Endothelial cell of umbilical vein (primary cell): ENCODE measurements at regions of chr13 and their contacts with region 1.

Region 1: GRCh38 chr13:98445340-98446233 is 131.3 kb downstream of the STK24 start:
- DNase-seq: peak; percentile 64
- H3K4me3 ChIP-seq: no peak overlapping the region
- H3K27ac ChIP-seq: no peak overlapping the region
- H3K4me1 ChIP-seq: no peaks in the 10 kb centered on the region
- H3K27me3 ChIP-seq: no peaks in the 10 kb centered on the region
- CTCF ChIP-seq: peak; percentile 93 to 99
- POLR2A ChIP-seq: no peak

Region 2: DNA sequence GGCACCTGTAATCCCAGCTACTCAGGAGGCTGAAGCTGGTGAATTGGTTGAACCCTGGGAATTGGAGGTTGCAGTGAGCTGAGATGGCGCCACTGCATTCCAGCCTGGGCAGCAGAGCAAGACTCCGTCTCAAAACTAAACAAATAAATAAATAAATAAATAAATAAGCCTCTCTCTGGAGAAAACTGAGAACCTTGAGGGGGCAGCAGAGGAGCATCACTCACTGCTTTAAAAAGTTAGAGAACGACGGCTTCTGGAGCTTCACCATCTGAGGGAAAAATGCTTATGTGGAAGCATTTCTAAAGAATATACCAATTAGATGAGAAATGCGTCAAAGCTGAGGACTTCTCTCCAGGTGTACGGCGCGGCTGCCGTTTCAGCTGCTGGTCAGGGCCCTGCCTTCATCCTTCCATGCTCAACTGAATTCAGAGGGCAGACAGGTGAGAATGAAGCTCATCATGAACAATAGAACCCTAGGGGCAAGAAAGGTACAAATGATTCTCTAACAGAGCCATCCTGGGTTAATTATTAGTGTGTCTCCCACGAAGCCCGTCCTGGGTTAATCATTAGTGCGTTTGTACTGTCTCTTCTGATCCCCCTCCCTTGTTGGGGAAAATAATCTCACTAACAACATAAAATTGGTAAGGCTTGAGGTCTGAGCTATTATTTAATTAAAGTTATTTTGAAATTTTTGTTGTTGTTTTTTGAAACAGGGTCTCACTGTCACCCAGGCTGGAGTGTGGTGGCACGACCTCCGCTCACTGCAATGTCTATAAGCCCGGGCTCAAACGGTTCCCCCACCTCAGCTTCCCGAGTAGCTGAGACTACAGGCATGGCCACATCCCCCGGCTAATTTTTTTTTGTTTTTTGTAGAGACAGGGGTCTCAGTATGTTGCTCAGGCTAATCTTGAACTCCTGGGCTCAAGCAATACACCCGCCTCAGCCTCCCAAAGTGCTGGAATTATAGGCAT is 412.0 kb before region 1 on chr13:
- CTCF ChIA-PET with region 1: interaction called, 3 read pairs
- POLR2A ChIA-PET with region 1: no interaction called
- dilution Hi-C with region 1: no loop called
- intact Hi-C with region 1: loop called (anchors 1 kb)
- DNase-seq: peak; percentile 45
- H3K4me3 ChIP-seq: no peak overlapping the region
- H3K27ac ChIP-seq: no peak overlapping the region
- H3K4me1 ChIP-seq: no peaks in the 10 kb centered on the region
- H3K27me3 ChIP-seq: no peaks in the 10 kb centered on the region
- CTCF ChIP-seq: peak; percentile 14 to 35
- POLR2A ChIP-seq: no peak

Region 3: GRCh38 chr13:98423417-98423816 is 22.2 kb before region 1 on chr13:
- CTCF ChIA-PET with region 1: no interaction called
- POLR2A ChIA-PET with region 1: no interaction called
- dilution Hi-C with region 1: no loop called
- intact Hi-C with region 1: no loop called
- DNase-seq: no peak
- H3K4me3 ChIP-seq: no peak overlapping the region
- H3K27ac ChIP-seq: no peak overlapping the region
- H3K4me1 ChIP-seq: no peaks in the 10 kb centered on the region
- H3K27me3 ChIP-seq: no peaks in the 10 kb centered on the region
- CTCF ChIP-seq: no peak
- POLR2A ChIP-seq: no peak

Region 4: DNA sequence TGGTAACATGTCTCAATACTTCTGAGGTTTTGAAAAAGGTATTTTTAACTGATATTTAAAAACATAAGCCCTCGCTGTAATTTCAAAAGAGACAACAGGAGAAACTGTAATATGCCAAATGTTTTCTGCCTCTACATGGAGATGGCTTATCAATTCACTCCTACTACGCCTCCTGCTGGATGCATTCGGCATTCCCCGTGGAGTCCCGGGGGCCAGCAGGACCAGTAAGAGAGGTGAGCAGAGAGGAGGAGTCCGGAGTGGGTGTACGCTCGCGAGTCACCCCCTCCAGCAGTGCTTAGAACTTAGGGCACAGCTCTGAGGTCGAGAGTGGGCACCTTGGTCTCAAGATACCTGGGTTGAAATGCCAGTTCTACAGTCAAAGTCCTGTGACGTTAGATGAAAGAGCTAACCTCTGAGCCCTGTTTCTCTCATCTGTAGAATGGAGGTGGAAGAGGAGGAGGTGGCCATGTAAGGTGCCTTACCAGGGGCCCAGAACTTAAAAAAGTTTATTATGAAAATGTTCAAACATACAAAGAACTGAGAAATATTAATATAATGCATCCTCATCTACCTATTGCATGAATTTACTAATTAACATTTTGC is 21.1 kb after region 1 on chr13:
- CTCF ChIA-PET with region 1: interaction called, 7 read pairs
- POLR2A ChIA-PET with region 1: no interaction called
- dilution Hi-C with region 1: no loop called
- intact Hi-C with region 1: loop called (anchors 1 kb)
- DNase-seq: peak; percentile 67
- H3K4me3 ChIP-seq: no peak overlapping the region
- H3K27ac ChIP-seq: no peak overlapping the region
- H3K4me1 ChIP-seq: no peaks in the 10 kb centered on the region
- H3K27me3 ChIP-seq: no peaks in the 10 kb centered on the region
- CTCF ChIP-seq: peak; percentile 75 to 77
- POLR2A ChIP-seq: no peak

Region 5: GRCh38 chr13:98576963-98577822 is 131.6 kb after region 1 on chr13 and contains the start of gene STK24:
- CTCF ChIA-PET with region 1: interaction called, 8 read pairs
- POLR2A ChIA-PET with region 1: interaction called, 4 read pairs
- dilution Hi-C with region 1: no loop called
- intact Hi-C with region 1: loop called (anchors 1 kb)
- DNase-seq: peak; percentile 78
- H3K4me3 ChIP-seq: peak within 1 kb of the TSS; percentile 84 to 98 (median 98)
- H3K27ac ChIP-seq: peak within 1 kb of the TSS; percentile 95
- H3K4me1 ChIP-seq: peaks cover 20% of the 10 kb centered on the region
- H3K27me3 ChIP-seq: no peaks in the 10 kb centered on the region
- CTCF ChIP-seq: no peak
- POLR2A ChIP-seq: peak; percentile 73
- total RNA-seq, gene STK24: 99.4 and 100 TPM in 2 replicates

Region 6: DNA sequence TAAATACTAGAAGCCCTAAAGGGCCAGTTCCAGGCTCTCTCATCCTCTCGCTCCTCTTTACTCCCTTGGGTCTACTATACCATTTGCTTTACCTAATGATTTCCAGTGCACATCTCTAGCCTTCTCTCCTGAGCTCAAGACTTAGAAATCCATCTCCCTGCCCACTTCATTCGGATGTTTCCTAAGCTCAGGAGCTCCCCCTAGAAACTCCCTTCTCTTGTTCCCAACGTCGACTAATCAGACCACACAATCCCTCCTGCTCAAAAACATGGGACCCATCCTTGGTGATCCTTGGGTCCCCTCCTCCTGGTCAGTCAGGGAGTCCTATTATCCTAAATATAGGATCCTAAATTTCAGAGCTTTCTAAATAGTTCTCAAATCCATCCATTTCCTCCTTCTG is 152.5 kb after region 1 on chr13:
- CTCF ChIA-PET with region 1: interaction called, 17 read pairs
- POLR2A ChIA-PET with region 1: no interaction called
- dilution Hi-C with region 1: no loop called
- intact Hi-C with region 1: no loop called
- DNase-seq: peak; percentile 31
- H3K4me3 ChIP-seq: no peak overlapping the region
- H3K27ac ChIP-seq: no peak overlapping the region
- H3K4me1 ChIP-seq: no peaks in the 10 kb centered on the region
- H3K27me3 ChIP-seq: peaks cover 9 to 14% of the 10 kb centered on the region in 2 experiments
- CTCF ChIP-seq: peak in 1 of 2 donors; percentile 36
- POLR2A ChIP-seq: no peak